ENCODE measurements at regions of chr16 and their contacts with region 1.

Region 1: DNA sequence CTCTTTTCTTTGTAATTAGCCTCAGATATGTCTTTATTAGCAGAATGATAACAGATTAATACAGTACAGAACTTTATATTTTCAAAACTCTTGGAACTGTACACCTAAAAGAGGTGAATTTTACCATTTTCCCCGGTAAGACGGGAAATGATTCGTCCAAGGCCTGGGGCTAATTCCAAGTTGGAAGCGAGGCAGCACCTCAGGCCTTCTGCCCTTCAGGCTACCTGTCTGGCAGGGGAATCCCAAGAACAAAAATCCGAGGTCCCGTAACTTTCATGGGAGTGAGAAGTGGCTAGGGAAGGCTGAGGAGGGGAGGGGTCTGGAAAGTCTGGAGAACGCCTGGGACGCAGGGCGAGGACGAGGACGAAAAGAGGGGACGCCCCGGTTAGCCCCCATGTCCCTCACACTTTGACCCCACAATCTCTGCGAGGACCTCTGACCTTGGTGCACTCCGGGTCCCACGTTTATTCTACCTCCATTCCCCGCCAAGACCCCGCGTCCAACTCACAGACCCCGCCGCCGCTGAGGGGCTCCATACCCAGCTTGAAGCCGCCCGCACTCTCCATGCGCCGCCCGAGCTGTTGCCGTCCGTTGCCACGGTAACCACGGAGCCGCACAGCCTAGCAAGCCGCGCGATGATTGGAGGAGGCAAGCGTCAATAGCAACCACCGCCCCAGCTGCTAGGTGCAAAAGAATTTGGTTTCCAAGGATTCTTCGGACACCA is at the start of gene HYDIN:
- DNase-seq: peak; percentile 83 to 90
- H3K4me3 ChIP-seq: peak within 1 kb of the TSS; percentile 81
- H3K27ac ChIP-seq: no peak within 1 kb of the TSS
- H3K4me1 ChIP-seq: peaks cover 6% of the 10 kb centered on the region
- H3K27me3 ChIP-seq: no peaks in the 10 kb centered on the region
- CTCF ChIP-seq: no peak
- total RNA-seq, gene HYDIN: 25.9 and 31.0 TPM in 2 replicates

Region 2: DNA sequence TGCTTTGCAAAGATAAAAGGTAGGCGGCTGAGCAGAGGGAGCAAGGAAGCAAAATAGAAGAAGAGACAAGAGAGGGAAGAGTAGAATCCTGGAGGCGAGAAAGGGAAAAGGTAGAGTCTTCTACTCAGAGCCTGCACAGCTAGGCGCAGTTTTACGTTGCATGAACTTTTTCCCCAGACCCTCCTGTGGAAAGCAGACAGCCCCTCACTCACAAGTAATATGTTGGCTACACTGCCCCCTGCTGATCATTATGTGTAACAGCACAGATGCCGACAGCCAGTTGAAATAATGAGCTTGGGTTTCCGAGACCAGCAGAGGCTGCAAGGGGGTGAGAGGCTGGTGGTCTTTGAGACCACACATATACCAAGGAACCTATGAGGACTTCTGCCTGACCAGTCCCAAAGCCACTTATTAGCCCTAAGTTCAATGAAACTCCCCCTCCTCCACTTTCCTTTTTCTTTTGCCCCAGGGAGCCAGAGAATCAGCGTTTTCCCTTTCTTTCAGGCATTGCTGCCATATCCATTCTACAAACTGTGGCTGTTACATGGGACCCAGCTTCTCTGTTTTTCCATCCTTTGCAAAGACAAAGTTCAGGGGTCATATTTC is 81.4 kb after region 1 on chr16:
- CTCF ChIA-PET with region 1: no interaction called
- POLR2A ChIA-PET with region 1: interaction called, 18 read pairs
- intact Hi-C with region 1: no loop called
- DNase-seq: no peak
- H3K4me3 ChIP-seq: no peak overlapping the region
- H3K27ac ChIP-seq: no peak overlapping the region
- H3K4me1 ChIP-seq: no peaks in the 10 kb centered on the region
- H3K27me3 ChIP-seq: no peaks in the 10 kb centered on the region
- CTCF ChIP-seq: peak; percentile 82

Measured in PC-9 (cell line).